Mammary epithelial cell (primary cell): ENCODE measurements at regions of chr17 and their contacts with region 1.

Region 1: DNA sequence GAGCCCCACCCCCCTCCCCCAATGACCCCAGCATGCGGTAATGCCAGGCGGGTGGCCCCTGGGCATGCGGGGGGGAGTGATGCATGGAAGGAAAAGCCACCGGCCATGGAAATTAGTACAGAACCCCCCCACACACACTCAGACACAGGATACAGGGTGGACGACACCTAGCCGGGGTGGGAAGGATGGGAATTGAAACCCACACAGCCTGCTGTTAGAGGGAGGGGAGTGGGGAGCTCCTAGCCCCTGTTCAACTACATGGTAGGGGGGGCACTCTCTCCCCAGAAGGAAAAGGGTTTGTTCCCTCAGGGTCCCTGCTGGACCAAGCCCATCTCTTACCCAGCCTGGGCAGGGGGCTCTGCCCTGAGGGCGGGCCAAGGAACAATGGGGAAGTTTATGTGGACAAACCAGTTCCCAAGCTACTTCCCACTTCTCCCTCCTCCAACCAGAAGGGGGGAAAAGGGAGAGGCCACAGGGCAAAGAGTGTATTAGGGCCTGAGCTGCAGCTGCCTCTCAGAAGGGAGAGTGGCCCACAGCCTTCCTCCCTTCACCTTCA is 5.2 kb downstream of the TMUB2 start:
- DNase-seq: no peak
- H3K4me3 ChIP-seq: no peak overlapping the region
- H3K27ac ChIP-seq: no peak overlapping the region
- H3K4me1 ChIP-seq: peaks cover 12% of the 10 kb centered on the region
- H3K27me3 ChIP-seq: no peaks in the 10 kb centered on the region
- CTCF ChIP-seq: no peak

Region 2: DNA sequence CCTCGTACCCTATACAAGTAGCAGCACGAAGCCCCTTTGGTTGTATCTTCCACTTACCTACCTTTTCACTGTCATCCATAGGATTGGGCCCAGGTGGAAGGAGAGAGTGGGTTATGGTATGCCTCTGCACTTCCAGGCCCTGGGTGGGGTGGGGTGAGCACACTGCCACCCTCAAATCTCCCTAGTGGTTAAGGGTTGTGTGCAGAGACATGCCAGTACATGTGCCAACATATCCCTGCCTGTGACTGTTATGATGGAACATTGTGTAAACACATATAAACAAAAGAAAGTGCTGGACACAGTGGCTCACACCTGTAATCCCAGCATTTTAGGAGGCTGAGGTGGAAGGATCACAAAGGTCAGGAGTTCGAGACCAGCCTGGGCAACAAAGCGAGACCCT is 39.1 kb before region 1 on chr17:
- CTCF ChIA-PET with region 1: no interaction called
- dilution Hi-C with region 1: loop called (anchors 5 kb)
- in situ Hi-C with region 1: no loop called
- intact Hi-C with region 1: no loop called
- DNase-seq: peak; percentile 85
- H3K4me3 ChIP-seq: no peak overlapping the region
- H3K27ac ChIP-seq: peak overlapping the region; percentile 50
- H3K4me1 ChIP-seq: peaks cover 14% of the 10 kb centered on the region
- H3K27me3 ChIP-seq: no peaks in the 10 kb centered on the region
- CTCF ChIP-seq: no peak

Region 3: DNA sequence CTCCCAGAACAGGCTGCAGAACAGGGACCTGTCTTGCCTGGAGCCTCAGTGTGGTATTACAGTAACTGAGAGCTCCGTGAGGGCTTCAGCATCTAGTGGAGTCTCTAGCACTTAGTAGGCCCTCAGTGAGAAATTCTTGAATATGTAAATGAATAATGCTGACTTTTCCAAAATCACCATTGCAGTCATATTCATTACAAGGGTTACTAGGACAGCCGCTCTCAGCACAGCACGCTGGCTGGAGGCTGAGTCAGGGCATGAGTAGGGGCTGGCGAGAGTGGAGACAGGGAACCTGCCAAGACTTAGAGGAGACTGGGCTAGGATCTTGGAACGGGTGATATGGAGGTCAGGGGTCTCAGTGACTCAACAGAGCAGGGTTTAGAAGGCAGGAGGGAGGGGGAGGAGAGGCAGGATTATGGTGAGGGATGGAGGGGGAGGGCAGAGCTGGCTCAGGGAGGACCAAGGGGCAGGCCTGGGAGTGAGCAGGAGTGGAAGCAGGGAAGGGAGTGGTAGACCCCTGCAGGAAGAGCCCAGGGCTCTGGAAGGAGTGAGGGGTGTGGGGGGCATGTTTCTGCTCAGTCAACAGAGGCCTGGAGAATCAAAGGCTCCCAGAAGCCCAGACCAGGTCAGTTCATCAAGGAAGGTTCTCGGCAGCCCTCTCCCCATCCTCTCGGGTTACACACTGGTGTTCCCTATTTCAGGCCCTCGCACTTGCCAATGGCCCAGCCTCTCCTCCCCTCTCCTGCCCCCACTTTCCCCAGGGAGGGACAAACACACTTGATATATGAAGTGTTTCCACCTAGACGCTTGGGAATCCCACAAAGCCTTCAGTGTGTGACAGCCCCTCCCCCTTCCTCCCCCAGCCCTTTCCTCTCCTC is 407.5 kb after region 1 on chr17:
- CTCF ChIA-PET with region 1: no interaction called
- dilution Hi-C with region 1: no loop called
- in situ Hi-C with region 1: no loop called
- intact Hi-C with region 1: no loop called
- DNase-seq: no peak
- H3K4me3 ChIP-seq: no peak overlapping the region
- H3K27ac ChIP-seq: no peak overlapping the region
- H3K4me1 ChIP-seq: no peaks in the 10 kb centered on the region
- H3K27me3 ChIP-seq: peaks cover 2% of the 10 kb centered on the region
- CTCF ChIP-seq: no peak